Calu3 (cell line): ENCODE measurements at regions of chr2 and their contacts with region 1.

Region 1: GRCh38 chr2:38750891-38751595 is at the start of gene SRSF7:
- DNase-seq: peak; percentile 95
- H3K4me3 Mint-ChIP-seq: peak within 1 kb of the TSS; percentile 93
- H3K27ac Mint-ChIP-seq: peak within 1 kb of the TSS; percentile 100
- H3K4me1 Mint-ChIP-seq: peaks cover 48% of the 10 kb centered on the region
- H3K27me3 Mint-ChIP-seq: peaks cover 12% of the 10 kb centered on the region
- CTCF ChIP-seq: no peak
- total RNA-seq, gene SRSF7: 184 and 203 TPM in 2 replicates

Region 2: GRCh38 chr2:38778687-38779082 is 27.6 kb after region 1 on chr2:
- CTCF ChIA-PET with region 1: interaction called, 4 read pairs
- intact Hi-C with region 1: loop called (anchors 2 kb)
- DNase-seq: no peak
- H3K4me3 Mint-ChIP-seq: peak overlapping the region; percentile 95
- H3K27ac Mint-ChIP-seq: peak overlapping the region; percentile 89
- H3K4me1 Mint-ChIP-seq: peaks cover 20% of the 10 kb centered on the region
- H3K27me3 Mint-ChIP-seq: no peaks in the 10 kb centered on the region
- CTCF ChIP-seq: no peak

Region 3: GRCh38 chr2:39266139-39266805 is 515.2 kb after region 1 on chr2:
- CTCF ChIA-PET with region 1: no interaction called
- intact Hi-C with region 1: no loop called
- DNase-seq: no peak
- H3K4me3 Mint-ChIP-seq: no peak overlapping the region
- H3K27ac Mint-ChIP-seq: no peak overlapping the region
- H3K4me1 Mint-ChIP-seq: no peaks in the 10 kb centered on the region
- H3K27me3 Mint-ChIP-seq: no peaks in the 10 kb centered on the region
- CTCF ChIP-seq: no peak